Left lung (tissue), 14 donors: ENCODE measurements at regions of chr7 and their contacts with region 1.

Region 1: DNA sequence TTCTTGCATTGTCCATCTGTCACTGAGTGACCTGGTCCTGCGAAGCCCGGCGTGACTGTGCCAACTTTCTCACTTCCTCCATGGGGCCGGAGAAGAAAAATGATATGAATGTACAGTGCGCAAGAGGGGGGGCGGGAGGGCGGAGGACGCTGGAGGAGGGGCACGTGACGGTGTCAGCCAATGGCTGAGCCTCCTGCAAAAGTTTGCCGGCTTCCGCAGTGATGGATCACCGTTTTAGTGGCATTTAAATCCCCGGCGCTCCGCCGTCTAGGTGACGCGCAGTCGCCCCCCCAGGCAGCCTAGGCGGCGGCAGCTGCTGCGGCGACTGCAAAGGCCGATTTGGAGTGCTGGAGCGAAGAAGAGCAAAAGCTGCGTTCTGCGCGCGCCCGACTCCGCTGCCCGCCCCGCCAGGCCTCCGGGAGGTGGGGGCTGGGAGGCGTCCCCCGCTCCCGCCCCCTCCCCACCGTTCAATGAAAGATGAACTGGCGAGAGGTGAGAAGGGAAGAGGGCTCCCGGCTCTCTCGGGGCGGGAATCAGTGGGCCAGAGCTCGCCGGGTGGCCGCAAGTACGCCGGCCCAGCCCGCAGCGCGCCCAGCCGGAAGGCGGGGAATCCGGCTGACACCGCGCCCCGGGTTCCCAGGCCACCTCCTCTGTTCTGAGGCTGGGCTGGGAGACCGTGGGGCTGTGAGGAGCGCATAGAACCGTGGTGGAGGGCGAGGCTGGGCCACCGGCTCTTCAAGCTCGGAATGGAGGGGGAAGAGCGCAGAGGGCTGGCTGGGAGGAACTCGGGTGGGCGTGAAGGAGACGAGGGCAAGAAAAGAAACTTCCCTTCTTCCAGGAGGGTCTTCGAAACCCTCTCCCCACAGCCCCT is at the start of gene HOXA1:
- DNase-seq: peak; percentile 86 to 95 (median 88)
- ATAC-seq: peak; percentile 81
- H3K4me3 ChIP-seq: peak within 1 kb of the TSS; percentile 59 to 88
- H3K27ac ChIP-seq: peak within 1 kb of the TSS; percentile 88 to 90
- H3K4me1 ChIP-seq: peaks cover 4 to 37% of the 10 kb centered on the region in 2 donors
- H3K27me3 ChIP-seq: peaks cover 13 to 100% of the 10 kb centered on the region in 2 donors
- CTCF ChIP-seq: no peak
- polyA plus RNA-seq, gene HOXA1: 1.9 to 3.1 (median 2.3) TPM

Region 2: DNA sequence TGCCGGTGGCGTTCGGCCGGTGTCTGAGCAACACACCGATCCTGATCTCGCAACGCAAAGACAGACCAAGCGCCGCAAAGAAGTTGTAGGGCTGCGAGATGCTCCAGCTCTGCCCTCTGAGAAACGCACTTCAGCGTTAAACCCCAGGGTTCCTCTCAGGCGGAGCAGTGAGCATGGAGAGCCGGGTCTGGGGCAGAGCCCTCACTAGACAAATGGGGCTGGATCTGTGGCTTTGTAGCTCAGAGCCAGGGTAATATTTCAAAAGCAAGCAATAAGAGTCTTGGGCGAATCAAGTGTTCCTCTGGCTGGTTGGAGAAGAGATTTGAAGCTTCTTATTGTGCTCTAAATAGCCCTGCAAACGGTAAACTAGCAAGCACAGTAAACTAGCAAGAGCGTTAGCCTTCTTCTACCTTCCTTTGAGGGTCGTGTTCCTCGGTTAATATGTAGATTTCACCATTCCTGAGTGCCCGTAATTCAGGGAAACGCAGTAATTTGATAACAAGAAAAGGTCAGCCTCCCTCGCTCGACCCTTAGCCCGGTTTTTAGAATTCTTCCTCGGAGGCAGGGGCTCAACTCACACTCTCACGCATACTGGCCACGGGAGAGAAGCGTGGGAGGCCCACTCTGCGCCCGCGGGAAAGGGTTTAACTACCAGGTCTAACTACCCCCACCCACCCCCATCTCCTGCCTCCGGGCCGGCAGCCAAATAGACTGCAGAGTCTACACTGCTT is 238.5 kb before region 1 on chr7:
- intact Hi-C with region 1: loop called in 1 of 2 experiments (anchors 5 kb)
- DNase-seq: peak in 2 of 4 donors; percentile 37 to 74
- ATAC-seq: peak; percentile 75
- H3K4me3 ChIP-seq: peak overlapping the region; percentile 15
- H3K27ac ChIP-seq: peak overlapping the region; percentile 71 to 88
- H3K4me1 ChIP-seq: peaks cover 19 to 71% of the 10 kb centered on the region in 2 donors
- H3K27me3 ChIP-seq: peaks cover 0 to 16% of the 10 kb centered on the region in 2 donors
- CTCF ChIP-seq: no peak

Region 3: GRCh38 chr7:27143023-27143949 is 47.2 kb after region 1 on chr7 and contains the start of gene HOXA5:
- intact Hi-C with region 1: loop called in 1 of 2 experiments (anchors 5 kb)
- DNase-seq: peak in 3 of 4 donors; percentile 81 to 97 (median 94)
- ATAC-seq: peak; percentile 77
- H3K4me3 ChIP-seq: peak within 1 kb of the TSS; percentile 52 to 56
- H3K27ac ChIP-seq: peak within 1 kb of the TSS; percentile 86 to 92
- H3K4me1 ChIP-seq: peaks cover 0 to 15% of the 10 kb centered on the region in 2 donors
- H3K27me3 ChIP-seq: peaks cover 35 to 100% of the 10 kb centered on the region in 2 donors
- CTCF ChIP-seq: peak; percentile 69 to 71
- polyA plus RNA-seq, gene HOXA5: 81.7 to 94.7 (median 89.1) TPM

Region 4: DNA sequence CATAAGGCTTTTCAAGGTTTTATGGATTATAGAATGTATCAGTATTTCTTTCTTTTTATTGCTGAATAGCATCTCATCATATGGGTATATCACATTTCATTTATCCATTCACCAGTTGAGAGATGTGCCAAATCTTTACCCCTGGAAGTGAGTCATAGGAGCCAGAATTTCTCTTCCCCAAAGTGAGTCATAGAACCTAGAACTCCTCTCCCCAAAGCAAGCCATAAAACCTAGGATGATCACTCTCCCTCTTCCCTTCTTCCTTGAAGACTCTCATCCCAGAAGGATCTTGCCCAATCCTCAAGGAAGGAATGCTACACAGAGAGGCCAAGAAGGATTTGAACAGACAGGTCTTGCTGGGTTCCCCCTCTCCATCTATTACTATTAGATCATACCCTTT is 346.3 kb after region 1 on chr7:
- intact Hi-C with region 1: no loop called
- DNase-seq: no peak
- ATAC-seq: no peak
- H3K4me3 ChIP-seq: no peak overlapping the region
- H3K27ac ChIP-seq: no peak overlapping the region
- H3K4me1 ChIP-seq: no peaks in the 10 kb centered on the region
- H3K27me3 ChIP-seq: peaks cover 0 to 3% of the 10 kb centered on the region in 2 donors
- CTCF ChIP-seq: no peak